Naive thymus-derived CD4-positive, alpha-beta T cell (primary cell): ENCODE measurements at regions of chr20 and their contacts with region 1.

Region 1: DNA sequence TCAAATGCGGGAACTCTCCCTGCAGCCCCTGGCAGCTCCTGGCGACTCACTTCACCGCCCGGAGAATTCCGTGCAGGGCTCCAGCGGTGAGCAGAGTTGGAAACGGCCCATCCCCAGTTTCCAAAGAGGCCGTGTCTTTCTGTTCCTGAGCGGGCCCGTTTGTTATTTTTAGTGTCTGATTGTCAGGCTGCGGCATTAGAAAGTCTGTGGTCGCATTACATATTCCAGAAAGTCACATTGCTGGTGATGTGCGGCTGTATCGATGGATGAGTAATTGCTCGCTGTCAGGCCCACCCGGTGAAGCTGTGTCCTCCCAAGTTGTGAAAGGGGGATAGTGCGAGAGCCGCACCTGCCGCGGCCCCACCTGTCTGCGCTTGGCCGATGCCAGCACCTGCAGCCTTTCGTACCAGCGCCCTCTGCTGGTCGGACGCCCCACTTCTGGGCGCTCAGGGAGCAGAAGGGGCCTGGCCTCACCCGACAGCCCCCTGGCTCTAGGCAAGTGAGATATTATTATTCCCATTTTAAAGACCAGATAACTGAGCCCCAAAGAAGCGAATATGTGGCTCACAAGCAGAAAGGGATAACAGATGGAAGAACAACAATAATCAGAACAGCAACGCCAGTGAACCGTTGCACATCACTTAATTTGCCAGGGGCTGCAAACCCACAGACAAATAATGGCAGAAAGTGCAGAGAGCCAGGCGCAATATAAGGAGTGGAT is 244.9 kb downstream of the TSHZ2 start:
- DNase-seq: peak; percentile 65 to 86 (median 79)
- ATAC-seq: peak; percentile 91
- H3K4me3 ChIP-seq: peak overlapping the region; percentile 34
- H3K4me3 Mint-ChIP-seq: peak overlapping the region; percentile 48 to 80 (median 74)
- H3K27ac ChIP-seq: peak overlapping the region; percentile 48
- H3K27ac Mint-ChIP-seq: peak overlapping the region; percentile 44 to 97 (median 74)
- H3K4me1 ChIP-seq: peaks cover 0 to 33% of the 10 kb centered on the region in 2 donors
- H3K4me1 Mint-ChIP-seq: peaks cover 14 to 46% (median 41%) of the 10 kb centered on the region in 7 donors
- H3K27me3 ChIP-seq: no peaks in the 10 kb centered on the region
- H3K27me3 Mint-ChIP-seq: peaks cover 0 to 4% (median 0%) of the 10 kb centered on the region in 5 donors

Region 2: DNA sequence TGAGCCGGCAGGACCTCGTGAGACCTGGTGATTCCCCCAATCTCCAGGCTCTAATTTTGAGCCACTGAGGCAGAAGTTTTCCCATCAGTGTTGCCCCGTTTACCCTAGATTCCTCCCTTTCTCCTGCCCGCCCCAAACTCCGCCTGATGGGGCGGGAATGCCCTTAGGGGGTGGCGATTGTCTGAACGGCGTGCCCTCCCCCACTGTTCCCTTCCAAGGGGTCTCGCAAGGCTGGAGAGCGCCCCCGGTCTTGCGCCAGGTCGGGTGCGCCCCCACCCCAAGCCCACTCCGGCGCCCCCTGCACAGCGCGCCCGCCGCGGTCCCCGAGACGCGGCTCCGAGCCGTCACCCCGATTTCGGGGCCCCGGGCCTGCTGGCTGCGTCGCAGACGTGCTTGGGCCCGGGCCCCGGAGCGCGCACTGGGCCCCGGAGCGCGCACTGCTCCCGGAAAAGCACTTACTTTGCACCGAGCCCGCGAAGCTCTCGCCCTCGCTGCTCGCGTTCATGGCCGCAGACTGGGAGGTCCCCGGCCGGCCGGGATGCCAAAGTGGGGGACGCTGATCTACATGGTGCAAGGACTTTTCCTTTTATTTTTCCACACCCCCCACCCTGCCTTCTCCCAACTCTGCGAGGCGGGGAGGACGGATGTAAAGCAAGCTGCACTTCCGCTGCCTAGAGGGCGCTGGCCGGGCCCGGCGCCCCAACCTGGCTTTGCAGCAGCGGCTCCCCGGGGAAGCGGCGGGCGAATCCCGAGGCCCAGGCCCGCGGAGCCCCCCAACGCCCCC is 1025.7 kb before region 1 on chr20 and contains the start of gene ZFP64:
- CTCF ChIA-PET with region 1: no interaction called
- POLR2A ChIA-PET with region 1: no interaction called
- intact Hi-C with region 1: loop called in 1 of 2 experiments (anchors 5 kb)
- DNase-seq: peak; percentile 72 to 85 (median 83)
- ATAC-seq: peak; percentile 89
- H3K4me3 ChIP-seq: peak within 1 kb of the TSS; percentile 88
- H3K4me3 Mint-ChIP-seq: peak within 1 kb of the TSS; percentile 81 to 96 (median 94)
- H3K27ac ChIP-seq: peak within 1 kb of the TSS; percentile 78
- H3K27ac Mint-ChIP-seq: peak within 1 kb of the TSS; percentile 86 to 95 (median 93)
- H3K4me1 ChIP-seq: peaks cover 0 to 10% of the 10 kb centered on the region in 2 donors
- H3K4me1 Mint-ChIP-seq: peaks cover 7 to 27% (median 18%) of the 10 kb centered on the region in 7 donors
- H3K27me3 ChIP-seq: no peaks in the 10 kb centered on the region
- H3K27me3 Mint-ChIP-seq: no peaks in the 10 kb centered on the region
- total RNA-seq, gene ZFP64: 8.0 to 14.6 (median 11.6) TPM

Region 3: GRCh38 chr20:52379723-52380336 is 837.2 kb before region 1 on chr20:
- CTCF ChIA-PET with region 1: no interaction called
- POLR2A ChIA-PET with region 1: no interaction called
- intact Hi-C with region 1: loop called in 1 of 2 experiments (anchors 1 kb)
- DNase-seq: peak in 6 of 9 donors; percentile 13 to 35 (median 22)
- ATAC-seq: no peak
- H3K4me3 ChIP-seq: no peak overlapping the region
- H3K4me3 Mint-ChIP-seq: peak overlapping the region in 1 of 10 donors; percentile 14
- H3K27ac ChIP-seq: no peak overlapping the region
- H3K27ac Mint-ChIP-seq: peak overlapping the region in 5 of 9 donors; percentile 6 to 71 (median 45)
- H3K4me1 ChIP-seq: peaks cover 0 to 14% of the 10 kb centered on the region in 2 donors
- H3K4me1 Mint-ChIP-seq: peaks cover 0 to 47% (median 25%) of the 10 kb centered on the region in 7 donors
- H3K27me3 ChIP-seq: no peaks in the 10 kb centered on the region
- H3K27me3 Mint-ChIP-seq: peaks cover 0 to 2% (median 0%) of the 10 kb centered on the region in 5 donors

Region 4: GRCh38 chr20:53001498-53002301 is 215.3 kb before region 1 on chr20:
- CTCF ChIA-PET with region 1: interaction called, 11 read pairs
- POLR2A ChIA-PET with region 1: interaction called, 3 read pairs
- intact Hi-C with region 1: loop called in 1 of 2 experiments (anchors 1 kb)
- DNase-seq: peak in 7 of 9 donors; percentile 49 to 79 (median 71)
- ATAC-seq: peak; percentile 82
- H3K4me3 ChIP-seq: peak overlapping the region; percentile 32
- H3K4me3 Mint-ChIP-seq: peak overlapping the region; percentile 73 to 94 (median 84)
- H3K27ac ChIP-seq: peak overlapping the region; percentile 88
- H3K27ac Mint-ChIP-seq: peak overlapping the region in 7 of 9 donors; percentile 89 to 99 (median 97)
- H3K4me1 ChIP-seq: peaks cover 0 to 64% of the 10 kb centered on the region in 2 donors
- H3K4me1 Mint-ChIP-seq: peaks cover 27 to 97% (median 87%) of the 10 kb centered on the region in 7 donors
- H3K27me3 ChIP-seq: no peaks in the 10 kb centered on the region
- H3K27me3 Mint-ChIP-seq: no peaks in the 10 kb centered on the region

Region 5: DNA sequence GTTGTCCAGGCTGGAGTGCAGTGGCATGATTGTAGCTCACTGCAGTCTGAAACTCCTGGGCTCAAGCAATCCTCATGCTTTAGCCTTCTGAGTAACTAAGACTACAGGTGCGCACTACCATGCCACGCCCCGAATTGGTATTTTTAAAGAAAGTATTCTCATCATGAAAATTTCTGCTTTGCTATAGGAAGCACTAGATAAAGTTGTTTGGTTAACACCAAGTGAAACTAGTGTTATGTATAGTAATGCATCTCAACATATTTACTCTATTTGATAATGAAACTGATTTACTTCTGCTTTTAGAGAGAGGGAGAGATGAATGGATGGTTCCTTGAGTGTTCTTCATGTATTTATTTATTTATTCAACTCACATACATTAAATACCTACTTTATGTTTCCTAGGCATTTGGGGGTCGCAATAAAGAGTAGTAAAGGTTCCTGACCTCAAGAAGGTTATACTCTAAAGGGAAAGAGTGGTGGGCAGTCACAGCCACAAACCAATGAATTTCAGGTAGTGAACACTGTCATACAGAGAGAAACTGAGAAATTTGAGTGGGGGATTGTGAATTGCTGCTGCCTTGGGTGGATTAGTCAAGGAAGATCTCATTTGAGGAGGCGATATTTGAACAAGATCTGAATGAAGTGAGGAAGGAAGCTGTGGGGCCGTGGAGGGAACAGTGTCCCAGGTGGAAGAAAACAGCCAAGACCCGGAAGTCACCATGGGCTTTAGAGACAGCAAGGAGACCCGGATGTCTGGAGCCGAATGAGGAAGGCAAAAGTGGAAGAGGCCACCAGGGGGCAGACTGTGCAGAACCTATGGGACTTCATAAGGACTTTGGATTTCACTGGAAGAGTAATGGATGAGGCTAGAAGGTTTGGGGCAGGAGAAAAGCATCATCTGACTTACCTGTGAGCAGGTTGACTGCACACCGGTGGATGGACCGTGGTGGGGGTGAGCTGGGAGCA is 59.3 kb before region 1 on chr20:
- CTCF ChIA-PET with region 1: interaction called, 3 read pairs
- POLR2A ChIA-PET with region 1: no interaction called
- intact Hi-C with region 1: loop called in 1 of 2 experiments (anchors 5 kb)
- DNase-seq: peak in 2 of 9 donors; percentile 16 to 29
- ATAC-seq: peak; percentile 38
- H3K4me3 ChIP-seq: no peak overlapping the region
- H3K4me3 Mint-ChIP-seq: no peak overlapping the region
- H3K27ac ChIP-seq: no peak overlapping the region
- H3K27ac Mint-ChIP-seq: peak overlapping the region in 5 of 9 donors; percentile 14 to 44 (median 30)
- H3K4me1 ChIP-seq: no peaks in the 10 kb centered on the region
- H3K4me1 Mint-ChIP-seq: peaks cover 17 to 55% (median 46%) of the 10 kb centered on the region in 7 donors
- H3K27me3 ChIP-seq: no peaks in the 10 kb centered on the region
- H3K27me3 Mint-ChIP-seq: peaks cover 0 to 3% (median 0%) of the 10 kb centered on the region in 5 donors

Region 6: GRCh38 chr20:53270792-53271375 is 53.9 kb after region 1 on chr20:
- CTCF ChIA-PET with region 1: no interaction called
- POLR2A ChIA-PET with region 1: no interaction called
- intact Hi-C with region 1: no loop called
- DNase-seq: no peak
- ATAC-seq: no peak
- H3K4me3 ChIP-seq: no peak overlapping the region
- H3K4me3 Mint-ChIP-seq: no peak overlapping the region
- H3K27ac ChIP-seq: no peak overlapping the region
- H3K27ac Mint-ChIP-seq: no peak overlapping the region
- H3K4me1 ChIP-seq: no peaks in the 10 kb centered on the region
- H3K4me1 Mint-ChIP-seq: peaks cover 0 to 4% (median 0%) of the 10 kb centered on the region in 7 donors
- H3K27me3 ChIP-seq: no peaks in the 10 kb centered on the region
- H3K27me3 Mint-ChIP-seq: no peaks in the 10 kb centered on the region

Region 7: GRCh38 chr20:53949319-53949889 is 732.4 kb after region 1 on chr20:
- CTCF ChIA-PET with region 1: no interaction called
- POLR2A ChIA-PET with region 1: no interaction called
- intact Hi-C with region 1: loop called (anchors 5 to 10 kb)
- DNase-seq: peak; percentile 45 to 89 (median 86)
- ATAC-seq: peak; percentile 97
- H3K4me3 ChIP-seq: peak overlapping the region; percentile 1
- H3K4me3 Mint-ChIP-seq: peak overlapping the region; percentile 39 to 87 (median 76)
- H3K27ac ChIP-seq: peak overlapping the region; percentile 82
- H3K27ac Mint-ChIP-seq: peak overlapping the region; percentile 76 to 99 (median 97)
- H3K4me1 ChIP-seq: peaks cover 26 to 28% of the 10 kb centered on the region in 2 donors
- H3K4me1 Mint-ChIP-seq: peaks cover 23 to 47% (median 41%) of the 10 kb centered on the region in 7 donors
- H3K27me3 ChIP-seq: no peaks in the 10 kb centered on the region
- H3K27me3 Mint-ChIP-seq: peaks cover 0 to 2% (median 0%) of the 10 kb centered on the region in 5 donors

Region 8: DNA sequence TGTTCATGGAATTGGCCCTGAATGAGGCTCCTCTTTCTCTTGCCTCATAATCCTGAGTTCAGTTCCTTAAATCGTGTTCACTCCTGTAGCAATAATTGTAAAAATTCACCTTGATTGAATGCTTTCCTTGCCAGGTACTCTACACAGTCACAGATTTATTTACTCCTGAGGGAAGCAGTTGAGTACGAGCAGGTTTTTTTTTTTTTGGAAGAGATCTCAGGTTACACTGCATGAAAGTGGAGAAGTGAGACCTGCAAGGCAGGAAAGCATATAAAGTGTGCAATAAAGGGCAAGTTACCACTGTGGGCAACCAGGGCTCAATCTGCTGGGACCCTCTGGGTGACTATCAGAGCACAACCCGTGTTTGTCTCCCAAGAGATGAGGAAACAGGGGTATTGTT is 1165.4 kb after region 1 on chr20:
- CTCF ChIA-PET with region 1: no interaction called
- POLR2A ChIA-PET with region 1: no interaction called
- intact Hi-C with region 1: no loop called
- DNase-seq: no peak
- ATAC-seq: no peak
- H3K4me3 ChIP-seq: no peak overlapping the region
- H3K4me3 Mint-ChIP-seq: no peak overlapping the region
- H3K27ac ChIP-seq: no peak overlapping the region
- H3K27ac Mint-ChIP-seq: no peak overlapping the region
- H3K4me1 ChIP-seq: no peaks in the 10 kb centered on the region
- H3K4me1 Mint-ChIP-seq: no peaks in the 10 kb centered on the region
- H3K27me3 ChIP-seq: peaks cover 0 to 3% of the 10 kb centered on the region in 2 donors
- H3K27me3 Mint-ChIP-seq: peaks cover 0 to 58% (median 46%) of the 10 kb centered on the region in 5 donors